CD4-positive, alpha-beta memory T cell (primary cell): ENCODE measurements at regions of chr3 and their contacts with region 1.

Region 1: GRCh38 chr3:58177747-58178527 is 32.8 kb downstream of the DNASE1L3 start:
- DNase-seq: peak; percentile 78 to 81 (median 79)
- H3K4me3 ChIP-seq: peak overlapping the region in 1 of 2 donors; percentile 38
- H3K4me3 Mint-ChIP-seq: peak overlapping the region; percentile 42 to 81 (median 74)
- H3K27ac ChIP-seq: no peak overlapping the region
- H3K27ac Mint-ChIP-seq: peak overlapping the region in 1 of 7 donors; percentile 25
- H3K4me1 ChIP-seq: peaks cover 17% of the 10 kb centered on the region
- H3K4me1 Mint-ChIP-seq: peaks cover 3 to 17% (median 11%) of the 10 kb centered on the region in 4 donors
- H3K27me3 ChIP-seq: no peaks in the 10 kb centered on the region
- H3K27me3 Mint-ChIP-seq: no peaks in the 10 kb centered on the region

Region 2: GRCh38 chr3:58167431-58168351 is 10.2 kb before region 1 on chr3:
- CTCF ChIA-PET with region 1: interaction called, 59 read pairs
- POLR2A ChIA-PET with region 1: no interaction called
- intact Hi-C with region 1: no loop called
- DNase-seq: peak; percentile 21 to 51 (median 29)
- H3K4me3 ChIP-seq: no peak overlapping the region
- H3K4me3 Mint-ChIP-seq: no peak overlapping the region
- H3K27ac ChIP-seq: no peak overlapping the region
- H3K27ac Mint-ChIP-seq: peak overlapping the region in 3 of 7 donors; percentile 13 to 43 (median 22)
- H3K4me1 ChIP-seq: no peaks in the 10 kb centered on the region
- H3K4me1 Mint-ChIP-seq: no peaks in the 10 kb centered on the region
- H3K27me3 ChIP-seq: no peaks in the 10 kb centered on the region
- H3K27me3 Mint-ChIP-seq: no peaks in the 10 kb centered on the region

Region 3: DNA sequence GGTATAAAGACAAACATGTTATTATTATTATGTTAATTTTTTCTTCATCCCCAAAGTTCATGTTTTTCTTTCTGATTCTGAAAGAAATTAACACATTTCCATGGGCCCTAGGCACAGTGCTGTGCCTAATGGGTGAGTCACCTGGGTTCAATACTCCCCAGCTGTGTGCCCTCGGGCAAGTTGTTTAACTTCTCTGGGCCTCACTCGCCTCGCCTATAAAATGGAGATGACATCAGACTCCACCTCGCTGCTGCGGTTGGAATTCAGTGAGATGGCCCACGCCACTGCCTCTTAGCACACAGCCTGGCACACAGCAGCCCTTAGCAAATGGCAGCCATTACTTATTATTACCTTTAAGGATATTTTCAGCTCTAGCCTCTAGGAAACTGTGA is 10.2 kb after region 1 on chr3:
- CTCF ChIA-PET with region 1: interaction called, 59 read pairs
- POLR2A ChIA-PET with region 1: no interaction called
- intact Hi-C with region 1: no loop called
- DNase-seq: no peak
- H3K4me3 ChIP-seq: no peak overlapping the region
- H3K4me3 Mint-ChIP-seq: no peak overlapping the region
- H3K27ac ChIP-seq: no peak overlapping the region
- H3K27ac Mint-ChIP-seq: no peak overlapping the region
- H3K4me1 ChIP-seq: no peaks in the 10 kb centered on the region
- H3K4me1 Mint-ChIP-seq: peaks cover 0 to 4% (median 3%) of the 10 kb centered on the region in 4 donors
- H3K27me3 ChIP-seq: no peaks in the 10 kb centered on the region
- H3K27me3 Mint-ChIP-seq: no peaks in the 10 kb centered on the region

Region 4: GRCh38 chr3:58217209-58217811 is 39.4 kb after region 1 on chr3:
- CTCF ChIA-PET with region 1: interaction called, 38 read pairs
- POLR2A ChIA-PET with region 1: no interaction called
- intact Hi-C with region 1: loop called (anchors 1 kb)
- DNase-seq: peak; percentile 47 to 56 (median 50)
- H3K4me3 ChIP-seq: no peak overlapping the region
- H3K4me3 Mint-ChIP-seq: peak overlapping the region in 1 of 8 donors; percentile 61
- H3K27ac ChIP-seq: no peak overlapping the region
- H3K27ac Mint-ChIP-seq: no peak overlapping the region
- H3K4me1 ChIP-seq: peaks cover 6% of the 10 kb centered on the region
- H3K4me1 Mint-ChIP-seq: peaks cover 3 to 9% (median 5%) of the 10 kb centered on the region in 4 donors
- H3K27me3 ChIP-seq: no peaks in the 10 kb centered on the region
- H3K27me3 Mint-ChIP-seq: peaks cover 0 to 2% of the 10 kb centered on the region in 2 donors

Region 5: GRCh38 chr3:58532794-58533220 is 354.9 kb after region 1 on chr3:
- CTCF ChIA-PET with region 1: no interaction called
- POLR2A ChIA-PET with region 1: no interaction called
- intact Hi-C with region 1: no loop called
- DNase-seq: peak; percentile 71 to 79 (median 75)
- H3K4me3 ChIP-seq: no peak overlapping the region
- H3K4me3 Mint-ChIP-seq: no peak overlapping the region
- H3K27ac ChIP-seq: no peak overlapping the region
- H3K27ac Mint-ChIP-seq: peak overlapping the region in 6 of 7 donors; percentile 16 to 87 (median 69)
- H3K4me1 ChIP-seq: peaks cover 9% of the 10 kb centered on the region
- H3K4me1 Mint-ChIP-seq: peaks cover 4 to 8% (median 7%) of the 10 kb centered on the region in 4 donors
- H3K27me3 ChIP-seq: no peaks in the 10 kb centered on the region
- H3K27me3 Mint-ChIP-seq: no peaks in the 10 kb centered on the region

Region 6: GRCh38 chr3:58659051-58659675 is 481.2 kb after region 1 on chr3:
- CTCF ChIA-PET with region 1: no interaction called
- POLR2A ChIA-PET with region 1: no interaction called
- intact Hi-C with region 1: no loop called
- DNase-seq: no peak
- H3K4me3 ChIP-seq: no peak overlapping the region
- H3K4me3 Mint-ChIP-seq: no peak overlapping the region
- H3K27ac ChIP-seq: no peak overlapping the region
- H3K27ac Mint-ChIP-seq: no peak overlapping the region
- H3K4me1 ChIP-seq: no peaks in the 10 kb centered on the region
- H3K4me1 Mint-ChIP-seq: no peaks in the 10 kb centered on the region
- H3K27me3 ChIP-seq: no peaks in the 10 kb centered on the region
- H3K27me3 Mint-ChIP-seq: peaks cover 5 to 12% of the 10 kb centered on the region in 2 donors